Pancreas (tissue), 10 donors: ENCODE measurements at regions of chr5 and their contacts with region 1.

Region 1: DNA sequence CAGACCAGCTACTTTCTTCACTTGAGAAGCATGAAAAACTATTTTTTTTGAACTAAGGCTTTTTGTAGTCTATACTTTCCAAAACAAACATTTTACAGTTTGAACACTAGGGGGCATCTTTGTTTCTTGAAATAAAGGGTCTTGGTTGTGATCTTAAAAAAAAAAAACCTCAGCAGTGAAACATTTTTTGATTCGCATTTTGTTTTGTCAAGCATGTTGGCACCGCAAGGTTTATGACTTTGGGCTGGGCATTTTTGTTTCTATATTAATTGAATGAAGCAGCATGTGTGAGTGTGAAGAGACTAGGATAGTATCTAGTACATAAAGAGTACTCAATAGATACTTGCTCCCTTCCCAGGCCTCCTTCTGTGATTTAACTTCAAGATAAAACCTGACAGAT is 31.6 kb upstream of the ACOT12 start:
- DNase-seq: no peak
- ATAC-seq: peak in 3 of 4 donors; percentile 75 to 81 (median 78)
- H3K4me3 ChIP-seq: no peak overlapping the region
- H3K27ac ChIP-seq: no peak overlapping the region
- H3K4me1 ChIP-seq: peaks cover 0 to 5% (median 0%) of the 10 kb centered on the region in 3 donors
- H3K27me3 ChIP-seq: no peaks in the 10 kb centered on the region
- CTCF ChIP-seq: peak in 3 of 4 donors; percentile 35 to 56 (median 45)

Region 2: GRCh38 chr5:82165740-82166530 is 740.4 kb after region 1 on chr5:
- intact Hi-C with region 1: loop called in 1 of 3 experiments (anchors 10 kb)
- DNase-seq: peak in 5 of 6 donors; percentile 37 to 77 (median 75)
- ATAC-seq: peak; percentile 99 to 100 (median 99)
- H3K4me3 ChIP-seq: no peak overlapping the region
- H3K27ac ChIP-seq: peak overlapping the region; percentile 6 to 51 (median 34)
- H3K4me1 ChIP-seq: peaks cover 0 to 25% (median 23%) of the 10 kb centered on the region in 3 donors
- H3K27me3 ChIP-seq: no peaks in the 10 kb centered on the region
- CTCF ChIP-seq: peak in 3 of 4 donors; percentile 52 to 61 (median 58)